Endothelial cell of umbilical vein (primary cell): ENCODE measurements at regions of chr19 and their contacts with region 1.

Region 1: GRCh38 chr19:57410877-57411671 is at the start of gene ZNF17:
- DNase-seq: peak; percentile 95
- H3K4me3 ChIP-seq: peak within 1 kb of the TSS; percentile 91 to 99 (median 97)
- H3K27ac ChIP-seq: no peak within 1 kb of the TSS
- H3K4me1 ChIP-seq: peaks cover 8% of the 10 kb centered on the region
- H3K27me3 ChIP-seq: no peaks in the 10 kb centered on the region
- CTCF ChIP-seq: no peak
- POLR2A ChIP-seq: no peak
- total RNA-seq, gene ZNF17: 4.7 and 6.4 TPM in 2 replicates

Region 2: DNA sequence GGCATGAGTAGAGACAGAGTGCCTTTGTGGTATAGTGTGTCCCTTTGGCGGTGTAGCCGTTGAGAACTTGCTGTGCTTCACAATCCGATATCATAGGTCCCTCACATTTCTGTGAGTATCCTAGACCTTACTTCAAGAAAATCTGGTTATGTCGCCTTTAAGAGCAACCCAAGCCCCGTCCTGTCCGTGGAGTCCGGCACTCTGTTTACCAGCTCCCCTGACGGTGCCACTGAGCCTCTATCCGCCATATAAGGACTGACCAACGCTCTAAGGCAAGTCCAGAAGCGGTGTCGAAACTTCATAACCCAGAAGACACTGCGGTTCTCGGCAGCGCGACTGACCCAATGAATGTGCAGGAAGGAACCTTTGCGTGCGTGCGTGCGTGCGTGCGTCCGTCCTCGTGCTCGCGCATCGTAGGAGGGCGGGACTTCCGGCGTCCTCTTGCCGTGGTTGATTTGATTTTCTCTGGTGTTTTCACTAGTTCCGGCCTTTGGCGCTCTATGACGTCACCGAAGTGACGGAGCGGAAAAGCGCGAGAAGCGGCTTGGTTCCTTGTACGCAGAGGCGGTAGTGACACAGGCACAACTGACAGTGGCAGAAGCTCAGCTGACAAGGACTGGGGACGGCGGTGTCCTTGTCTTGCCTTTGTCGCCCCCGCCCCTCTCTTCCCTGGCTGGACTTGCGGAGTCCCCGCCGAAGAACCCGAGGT is 47.9 kb before region 1 on chr19 and contains the starts of genes TRAPPC2B and ZNF547:
- CTCF ChIA-PET with region 1: no interaction called
- POLR2A ChIA-PET with region 1: no interaction called
- dilution Hi-C with region 1: no loop called
- intact Hi-C with region 1: loop called (anchors 1 kb)
- DNase-seq: peak; percentile 100
- H3K4me3 ChIP-seq: peak within 1 kb of the TSS; percentile 47 to 92 (median 74)
- H3K27ac ChIP-seq: peak within 1 kb of the TSS; percentile 27
- H3K4me1 ChIP-seq: peaks cover 8% of the 10 kb centered on the region
- H3K27me3 ChIP-seq: no peaks in the 10 kb centered on the region
- CTCF ChIP-seq: no peak
- POLR2A ChIP-seq: peak; percentile 70
- total RNA-seq, gene TRAPPC2B: 6.3 and 7.5 TPM in 2 replicates
- total RNA-seq, gene ZNF547: 2.7 and 3.2 TPM in 2 replicates

Region 3: DNA sequence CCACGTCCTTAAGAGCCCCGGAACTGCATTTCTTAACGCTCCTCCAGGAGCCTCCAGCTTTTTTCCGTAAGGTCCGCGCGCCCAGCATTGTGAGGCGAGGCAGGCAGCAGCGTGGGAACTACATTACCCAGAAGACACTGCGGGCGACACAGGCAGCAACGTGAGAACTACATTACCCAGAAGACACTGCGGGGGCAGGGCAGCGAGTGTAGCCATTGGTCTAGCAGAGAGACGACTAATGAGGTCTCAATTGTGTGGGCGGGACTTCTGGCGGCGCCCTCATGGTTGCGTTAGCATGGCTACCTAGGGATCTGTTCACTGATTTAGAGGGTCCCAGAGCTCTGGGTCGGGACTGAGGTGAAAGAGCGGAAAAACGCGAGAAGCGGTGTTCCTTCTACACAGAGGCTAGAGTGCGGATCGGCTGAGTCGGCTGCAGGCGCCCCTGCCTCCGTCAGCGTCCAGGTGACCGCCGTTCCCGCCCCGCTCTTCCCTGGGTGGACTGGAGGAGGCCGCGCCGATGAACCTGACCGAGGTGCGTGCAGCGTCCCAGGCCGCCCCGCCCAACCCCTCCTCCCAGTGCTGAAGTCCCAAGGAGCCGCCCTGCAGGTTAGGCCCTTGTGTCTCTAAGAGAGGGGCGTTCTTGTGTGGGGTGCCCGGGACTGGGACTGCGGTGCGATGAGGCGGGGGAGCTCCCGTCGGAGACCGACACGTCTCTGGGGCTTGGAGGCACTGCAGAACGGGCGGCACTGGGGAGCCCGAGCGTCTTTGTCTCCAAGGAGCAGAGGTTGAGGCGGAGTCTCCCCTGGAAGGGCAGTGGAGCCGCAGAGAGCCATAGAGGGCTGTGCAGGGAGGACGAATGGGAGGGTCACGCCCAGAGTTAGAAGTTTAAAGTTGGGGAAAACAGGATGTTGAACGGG is 24.2 kb after region 1 on chr19 and contains the start of gene ZNF749:
- CTCF ChIA-PET with region 1: interaction called, 3 read pairs
- POLR2A ChIA-PET with region 1: no interaction called
- dilution Hi-C with region 1: no loop called
- intact Hi-C with region 1: loop called (anchors 1 kb)
- DNase-seq: peak; percentile 98
- H3K4me3 ChIP-seq: peak within 1 kb of the TSS; percentile 58 to 81 (median 68)
- H3K27ac ChIP-seq: no peak within 1 kb of the TSS
- H3K4me1 ChIP-seq: peaks cover 10% of the 10 kb centered on the region
- H3K27me3 ChIP-seq: no peaks in the 10 kb centered on the region
- CTCF ChIP-seq: no peak
- POLR2A ChIP-seq: peak; percentile 14
- total RNA-seq, gene ZNF749: 8.9 and 11.5 TPM in 2 replicates

Region 4: GRCh38 chr19:57477191-57478008 is 66.3 kb after region 1 on chr19 and contains the start of gene ZNF772:
- CTCF ChIA-PET with region 1: no interaction called
- POLR2A ChIA-PET with region 1: no interaction called
- dilution Hi-C with region 1: no loop called
- intact Hi-C with region 1: loop called (anchors 5 kb)
- DNase-seq: peak; percentile 95
- H3K4me3 ChIP-seq: peak within 1 kb of the TSS; percentile 58 to 86 (median 63)
- H3K27ac ChIP-seq: peak within 1 kb of the TSS; percentile 46
- H3K4me1 ChIP-seq: no peaks in the 10 kb centered on the region
- H3K27me3 ChIP-seq: no peaks in the 10 kb centered on the region
- CTCF ChIP-seq: peak; percentile 57 to 71
- POLR2A ChIP-seq: no peak
- total RNA-seq, gene ZNF772: 6.4 and 7.0 TPM in 2 replicates

Region 5: DNA sequence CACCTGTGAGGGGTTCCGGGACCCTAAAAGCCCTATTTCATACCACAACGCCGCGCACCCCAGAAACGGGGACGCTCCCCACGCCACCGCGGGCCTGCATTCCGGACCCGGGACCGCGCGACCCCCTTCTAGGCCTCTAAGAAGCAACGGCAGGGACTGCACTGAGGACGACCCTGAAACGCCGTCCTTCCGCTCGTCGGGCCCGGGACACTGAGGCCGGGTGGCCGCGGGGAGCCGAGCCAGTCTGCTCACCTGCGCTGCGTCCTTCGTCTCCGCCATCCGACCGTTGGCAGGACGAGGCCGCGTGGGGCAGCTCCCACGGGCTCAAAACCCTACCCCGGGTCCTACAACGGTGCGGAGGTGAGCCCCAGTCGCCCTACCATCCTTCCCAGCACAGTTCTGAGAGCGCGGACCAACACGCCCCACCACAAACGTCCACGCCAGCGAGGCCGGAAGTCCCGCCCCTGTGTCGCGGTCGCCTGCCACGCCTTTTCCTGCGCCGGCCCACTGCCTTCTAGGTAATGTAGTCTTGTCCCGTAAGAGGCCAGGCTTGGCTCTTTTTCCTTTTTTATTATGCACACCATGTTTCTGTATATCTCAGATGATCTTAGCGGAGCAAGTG is 148.4 kb after region 1 on chr19 and contains the start of gene ZNF550:
- CTCF ChIA-PET with region 1: no interaction called
- POLR2A ChIA-PET with region 1: no interaction called
- dilution Hi-C with region 1: no loop called
- intact Hi-C with region 1: loop called (anchors 10 kb)
- DNase-seq: peak; percentile 88
- H3K4me3 ChIP-seq: peak within 1 kb of the TSS; percentile 21 to 79 (median 67)
- H3K27ac ChIP-seq: no peak within 1 kb of the TSS
- H3K4me1 ChIP-seq: peaks cover 11% of the 10 kb centered on the region
- H3K27me3 ChIP-seq: no peaks in the 10 kb centered on the region
- CTCF ChIP-seq: no peak
- POLR2A ChIP-seq: peak; percentile 66
- total RNA-seq, gene ZNF550: 4.8 and 8.4 TPM in 2 replicates